Activated CD4-positive, alpha-beta T cell treated with anti-CD3 and anti-CD28 coated beads for 36 hours (primary cell): ENCODE measurements at regions of chr10 and their contacts with region 1.

Region 1: GRCh38 chr10:97612386-97612785 is 20.9 kb downstream of the MORN4 start:
- DNase-seq: no peak
- ATAC-seq: no peak
- H3K4me3 Mint-ChIP-seq: no peak overlapping the region
- H3K27ac Mint-ChIP-seq: no peak overlapping the region
- H3K4me1 Mint-ChIP-seq: no peaks in the 10 kb centered on the region
- H3K27me3 Mint-ChIP-seq: no peaks in the 10 kb centered on the region

Region 2: DNA sequence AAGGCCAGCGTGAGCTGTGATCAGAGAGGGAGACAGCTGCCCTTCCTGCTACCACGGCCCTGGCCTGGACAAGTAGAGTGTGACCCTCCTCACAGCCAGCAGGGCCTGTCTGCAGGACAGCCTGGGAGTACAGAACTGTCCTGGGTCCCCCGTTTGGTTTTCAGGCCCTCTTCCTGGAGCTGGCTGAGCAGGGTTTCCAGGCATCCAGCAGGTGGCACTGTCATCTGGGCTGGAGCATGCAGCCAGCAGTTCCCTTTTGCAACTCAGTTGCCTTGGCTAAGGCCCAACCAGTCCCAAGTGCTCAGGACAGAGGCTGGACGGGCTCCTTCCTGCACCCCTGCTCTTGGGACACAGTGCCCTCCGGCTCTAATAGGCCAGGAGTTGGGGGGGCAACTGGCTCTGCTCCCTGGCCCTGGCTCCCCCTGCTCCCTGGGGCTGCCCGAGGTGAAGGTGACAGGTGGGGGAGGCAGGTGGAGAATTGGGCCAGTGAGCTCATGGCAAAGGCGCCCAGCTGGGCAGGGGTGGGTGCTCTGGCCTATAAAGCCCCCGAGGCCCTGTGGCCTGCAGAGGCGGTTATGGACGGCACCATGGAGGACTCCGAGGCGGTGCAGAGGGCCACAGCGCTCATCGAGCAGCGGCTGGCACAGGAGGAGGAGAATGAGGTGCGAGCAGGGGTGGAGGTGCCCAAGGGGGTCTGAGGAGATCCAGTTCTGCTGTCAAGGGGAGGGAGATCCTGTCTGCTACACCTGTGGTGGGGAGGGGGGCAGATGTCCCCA is 40.0 kb before region 1 on chr10 and contains the start of gene ANKRD2:
- CTCF ChIA-PET with region 1: interaction called, 5 read pairs
- POLR2A ChIA-PET with region 1: no interaction called
- intact Hi-C with region 1: loop called in 1 of 2 experiments (anchors 1 kb)
- DNase-seq: peak; percentile 79
- ATAC-seq: peak; percentile 84
- H3K4me3 Mint-ChIP-seq: no peak within 1 kb of the TSS
- H3K27ac Mint-ChIP-seq: no peak within 1 kb of the TSS
- H3K4me1 Mint-ChIP-seq: no peaks in the 10 kb centered on the region
- H3K27me3 Mint-ChIP-seq: no peaks in the 10 kb centered on the region
- total RNA-seq, gene ANKRD2: not detected